ENCODE measurements at regions of chr11 and their contacts with region 1.

Region 1: DNA sequence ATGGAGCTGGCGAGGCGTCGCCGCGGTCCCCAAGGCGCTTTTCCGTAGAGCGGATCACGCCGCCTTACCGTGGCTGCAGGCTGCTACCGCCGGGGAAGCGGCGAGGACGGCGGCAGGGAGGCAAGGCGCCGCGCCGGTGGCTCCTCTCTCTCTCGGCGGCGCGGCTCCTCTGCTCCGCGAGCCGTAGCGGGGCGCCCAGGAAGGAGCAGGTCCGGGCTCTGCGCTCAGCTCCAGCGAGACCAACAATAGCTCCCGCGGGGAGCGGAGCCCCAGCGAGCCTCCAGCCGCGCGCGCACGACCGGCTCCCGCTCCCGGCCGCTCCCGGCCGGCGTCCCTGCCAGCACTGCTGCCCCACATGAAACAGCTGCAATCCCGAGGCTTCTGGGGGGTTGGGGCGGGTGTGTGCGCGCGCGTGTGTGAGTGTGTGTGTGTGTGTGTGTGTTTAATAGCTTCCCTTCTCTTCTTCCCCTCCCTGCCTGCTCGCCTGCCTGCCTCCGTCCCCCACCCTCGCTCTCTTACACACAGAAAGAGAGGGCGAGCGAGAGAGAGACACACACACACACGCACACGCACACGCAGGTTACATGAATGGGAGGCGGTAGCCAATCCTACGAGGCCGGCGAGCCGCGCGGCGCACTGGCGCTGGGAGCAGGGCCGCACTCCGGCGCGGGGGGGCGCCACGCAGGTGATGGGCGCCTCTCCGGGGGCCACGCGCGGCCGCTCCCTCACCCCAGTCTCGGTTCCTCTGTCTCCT is at the start of gene TENM4:
- DNase-seq: peak; percentile 92
- ATAC-seq: peak; percentile 62
- H3K4me3 ChIP-seq: peak within 1 kb of the TSS; percentile 57
- H3K27ac ChIP-seq: peak within 1 kb of the TSS; percentile 77
- H3K4me1 ChIP-seq: peaks cover 6% of the 10 kb centered on the region
- H3K27me3 ChIP-seq: peaks cover 4% of the 10 kb centered on the region
- CTCF ChIP-seq: peak; percentile 53
- POLR2A ChIP-seq: peak; percentile 58; the same call in 1 of the 2 replicates
- RAD21 ChIP-seq: peak; percentile 36
- total RNA-seq, gene TENM4: 9.0 and 9.2 TPM in 2 replicates

Region 2: GRCh38 chr11:79052544-79052943 is 388.1 kb before region 1 on chr11:
- CTCF ChIA-PET with region 1: no interaction called
- POLR2A ChIA-PET with region 1: no interaction called
- dilution Hi-C with region 1: no loop called
- in situ Hi-C with region 1: no loop called
- intact Hi-C with region 1: loop called (anchors 1 kb)
- DNase-seq: no peak
- ATAC-seq: peak; percentile 8; the same call in 1 of the 2 replicates
- H3K4me3 ChIP-seq: no peak overlapping the region
- H3K27ac ChIP-seq: peak overlapping the region; percentile 55; the same call in 1 of the 2 replicates
- H3K4me1 ChIP-seq: peaks cover 24% of the 10 kb centered on the region
- H3K27me3 ChIP-seq: no peaks in the 10 kb centered on the region
- CTCF ChIP-seq: peak; percentile 17; the same call in 1 of the 2 replicates
- POLR2A ChIP-seq: no peak
- RAD21 ChIP-seq: 0 out of 2 replicates have a peak, but pooled peaks have one; percentile 14

Region 3: DNA sequence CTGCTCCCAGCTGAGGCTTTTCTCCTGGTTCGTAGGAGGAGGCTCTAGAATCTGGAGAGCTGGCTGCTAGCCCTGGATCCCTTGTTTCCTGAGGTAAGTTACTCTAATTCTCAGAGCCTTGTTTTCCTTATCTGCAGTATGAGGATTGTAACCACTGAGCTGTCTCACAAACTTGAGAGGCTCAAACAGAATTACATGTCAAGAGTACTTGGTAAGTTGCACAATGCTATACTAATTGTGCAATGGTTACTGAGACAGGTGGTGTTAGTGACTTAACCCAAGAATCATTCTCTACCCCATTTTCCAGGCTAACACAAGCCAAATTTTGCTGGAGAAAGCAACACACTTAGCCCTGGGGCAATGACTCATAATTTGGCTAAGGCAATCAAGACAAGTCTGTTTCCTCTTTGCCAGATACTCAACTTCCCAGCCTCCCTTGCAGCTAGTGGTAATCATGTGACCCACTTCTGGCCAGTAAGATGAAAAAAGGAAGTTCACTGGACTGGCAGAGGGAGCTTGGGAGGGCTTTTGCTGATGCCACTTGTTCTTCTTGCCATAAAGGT is 347.7 kb before region 1 on chr11:
- CTCF ChIA-PET with region 1: no interaction called
- POLR2A ChIA-PET with region 1: no interaction called
- dilution Hi-C with region 1: no loop called
- in situ Hi-C with region 1: loop called (anchors 10 kb)
- intact Hi-C with region 1: no loop called
- DNase-seq: peak; percentile 100
- ATAC-seq: peak; percentile 81
- H3K4me3 ChIP-seq: no peak overlapping the region
- H3K27ac ChIP-seq: peak overlapping the region; percentile 88
- H3K4me1 ChIP-seq: peaks cover 18% of the 10 kb centered on the region
- H3K27me3 ChIP-seq: no peaks in the 10 kb centered on the region
- CTCF ChIP-seq: no peak
- POLR2A ChIP-seq: no peak
- RAD21 ChIP-seq: no peak

Region 4: GRCh38 chr11:79100093-79100910 is 340.3 kb before region 1 on chr11:
- CTCF ChIA-PET with region 1: interaction called, 8 read pairs
- POLR2A ChIA-PET with region 1: no interaction called
- dilution Hi-C with region 1: no loop called
- in situ Hi-C with region 1: loop called (anchors 10 kb)
- intact Hi-C with region 1: loop called (anchors 10 kb)
- DNase-seq: peak; percentile 55
- ATAC-seq: peak; percentile 93
- H3K4me3 ChIP-seq: no peak overlapping the region
- H3K27ac ChIP-seq: no peak overlapping the region
- H3K4me1 ChIP-seq: peaks cover 5% of the 10 kb centered on the region
- H3K27me3 ChIP-seq: no peaks in the 10 kb centered on the region
- CTCF ChIP-seq: peak; percentile 77
- POLR2A ChIP-seq: no peak
- RAD21 ChIP-seq: peak; percentile 84

Region 5: GRCh38 chr11:79236541-79236971 is 204.1 kb before region 1 on chr11:
- CTCF ChIA-PET with region 1: no interaction called
- POLR2A ChIA-PET with region 1: no interaction called
- dilution Hi-C with region 1: no loop called
- in situ Hi-C with region 1: no loop called
- intact Hi-C with region 1: loop called (anchors 2 kb)
- DNase-seq: peak; percentile 99
- ATAC-seq: peak; percentile 81
- H3K4me3 ChIP-seq: no peak overlapping the region
- H3K27ac ChIP-seq: peak overlapping the region; percentile 54
- H3K4me1 ChIP-seq: peaks cover 16% of the 10 kb centered on the region
- H3K27me3 ChIP-seq: no peaks in the 10 kb centered on the region
- CTCF ChIP-seq: no peak
- POLR2A ChIP-seq: no peak; the same call in 1 of the 2 replicates
- RAD21 ChIP-seq: no peak

Region 6: GRCh38 chr11:79352349-79352703 is 88.3 kb before region 1 on chr11:
- CTCF ChIA-PET with region 1: no interaction called
- POLR2A ChIA-PET with region 1: no interaction called
- dilution Hi-C with region 1: no loop called
- in situ Hi-C with region 1: no loop called
- intact Hi-C with region 1: no loop called
- DNase-seq: no peak
- ATAC-seq: no peak
- H3K4me3 ChIP-seq: no peak overlapping the region
- H3K27ac ChIP-seq: no peak overlapping the region
- H3K4me1 ChIP-seq: no peaks in the 10 kb centered on the region
- H3K27me3 ChIP-seq: no peaks in the 10 kb centered on the region; the same call in 1 of the 2 replicates
- CTCF ChIP-seq: no peak
- POLR2A ChIP-seq: no peak
- RAD21 ChIP-seq: no peak

Region 7: DNA sequence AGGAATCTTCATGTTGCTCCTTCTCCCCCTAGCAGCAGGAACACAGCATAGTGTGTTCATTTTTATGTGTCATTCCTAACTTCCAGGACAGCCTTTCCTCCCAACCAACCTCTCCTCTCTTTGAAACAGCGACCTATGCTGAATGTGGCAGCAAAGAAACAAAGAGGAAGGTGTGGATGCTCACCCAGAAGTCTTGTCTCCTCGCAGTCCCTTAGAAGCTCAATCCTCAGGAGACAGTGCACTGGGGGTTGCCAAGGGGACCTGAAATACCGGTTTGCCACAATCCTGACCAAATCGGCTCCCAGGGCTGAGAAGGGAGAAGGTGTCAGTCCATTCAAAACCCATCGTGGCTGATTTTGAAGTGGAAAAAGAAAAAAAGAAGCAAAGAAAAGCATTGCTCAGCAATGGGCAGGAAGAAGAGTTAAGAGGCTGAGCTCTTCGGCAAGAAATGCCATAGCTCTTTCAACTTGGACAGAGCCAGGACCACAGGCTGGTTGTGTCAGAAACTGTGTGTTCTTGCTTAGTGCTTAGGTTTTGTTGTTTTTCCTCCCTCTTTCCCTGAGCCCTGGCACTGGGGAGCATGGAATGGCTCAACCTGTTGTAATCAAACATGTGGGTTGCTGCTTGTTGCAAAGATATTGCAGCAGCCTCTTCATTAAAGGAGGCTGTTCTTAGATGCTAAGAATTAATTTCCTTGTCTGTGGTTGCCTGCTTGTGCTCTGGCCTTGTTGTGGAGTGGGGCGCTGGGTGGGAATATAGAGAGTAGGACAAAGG is 30.6 kb after region 1 on chr11:
- CTCF ChIA-PET with region 1: no interaction called
- POLR2A ChIA-PET with region 1: no interaction called
- dilution Hi-C with region 1: no loop called
- in situ Hi-C with region 1: no loop called
- intact Hi-C with region 1: no loop called
- DNase-seq: no peak
- ATAC-seq: no peak
- H3K4me3 ChIP-seq: no peak overlapping the region
- H3K27ac ChIP-seq: no peak overlapping the region
- H3K4me1 ChIP-seq: peaks cover 1% of the 10 kb centered on the region; the same call in 1 of the 2 replicates
- H3K27me3 ChIP-seq: peaks cover 10% of the 10 kb centered on the region
- CTCF ChIP-seq: no peak
- POLR2A ChIP-seq: no peak
- RAD21 ChIP-seq: no peak

Region 8: GRCh38 chr11:79493555-79494171 is 53.0 kb after region 1 on chr11:
- CTCF ChIA-PET with region 1: interaction called, 4 read pairs
- POLR2A ChIA-PET with region 1: no interaction called
- dilution Hi-C with region 1: no loop called
- in situ Hi-C with region 1: no loop called
- intact Hi-C with region 1: loop called (anchors 1 kb)
- DNase-seq: peak; percentile 62
- ATAC-seq: peak; percentile 99
- H3K4me3 ChIP-seq: no peak overlapping the region
- H3K27ac ChIP-seq: no peak overlapping the region
- H3K4me1 ChIP-seq: no peaks in the 10 kb centered on the region
- H3K27me3 ChIP-seq: peaks cover 12% of the 10 kb centered on the region
- CTCF ChIP-seq: peak; percentile 81
- POLR2A ChIP-seq: no peak
- RAD21 ChIP-seq: peak; percentile 83

Measured in IMR-90 (cell line).